CD8-positive, alpha-beta T cell (primary cell): ENCODE measurements at regions of chr2 and their contacts with region 1.

Region 1: DNA sequence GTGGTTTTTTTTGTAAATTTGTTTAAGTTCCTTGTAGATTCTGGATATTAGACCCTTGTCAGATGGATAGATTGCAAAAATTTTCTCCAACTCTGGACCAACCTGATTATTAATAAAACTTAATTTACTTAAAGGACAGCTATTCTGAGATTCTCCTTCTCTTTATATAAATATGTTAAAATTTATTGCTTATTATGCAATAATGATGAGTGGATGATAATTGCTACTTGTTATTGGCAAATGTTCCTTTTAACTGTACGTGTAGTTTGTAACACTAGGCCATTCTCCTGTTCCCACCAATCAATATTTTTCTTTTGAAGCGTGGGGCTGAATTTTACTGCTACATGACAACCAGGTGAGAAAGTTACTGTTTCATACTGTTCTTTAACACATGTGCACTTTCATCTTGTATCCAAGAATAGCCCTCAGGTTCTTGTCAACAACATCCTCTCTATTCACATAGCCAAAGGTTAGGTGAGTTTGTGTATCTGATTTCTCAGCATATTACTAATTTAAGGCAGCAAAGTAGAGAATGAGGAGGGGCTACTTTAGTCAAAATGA is 16.6 kb upstream of the STK17B start:
- DNase-seq: no peak
- ATAC-seq: no peak
- H3K4me3 ChIP-seq: no peak overlapping the region
- H3K4me3 Mint-ChIP-seq: no peak overlapping the region
- H3K27ac ChIP-seq: no peak overlapping the region
- H3K27ac Mint-ChIP-seq: peak overlapping the region; percentile 64
- H3K4me1 ChIP-seq: peaks cover 62% of the 10 kb centered on the region
- H3K4me1 Mint-ChIP-seq: peaks cover 82% of the 10 kb centered on the region
- H3K27me3 ChIP-seq: no peaks in the 10 kb centered on the region
- H3K27me3 Mint-ChIP-seq: no peaks in the 10 kb centered on the region
- CTCF ChIP-seq: no peak

Region 2: GRCh38 chr2:196200557-196200956 is 12.6 kb after region 1 on chr2:
- CTCF ChIA-PET with region 1: interaction called, 5 read pairs
- POLR2A ChIA-PET with region 1: interaction called, 5 read pairs
- intact Hi-C with region 1: loop called (anchors 1 to 2 kb)
- DNase-seq: peak in 2 of 9 experiments; percentile 57 to 72
- ATAC-seq: peak; percentile 83
- H3K4me3 ChIP-seq: peak overlapping the region in 1 of 2 experiments; percentile 30
- H3K4me3 Mint-ChIP-seq: peak overlapping the region; percentile 59
- H3K27ac ChIP-seq: peak overlapping the region; percentile 0 to 58
- H3K27ac Mint-ChIP-seq: peak overlapping the region; percentile 81
- H3K4me1 ChIP-seq: peaks cover 28% of the 10 kb centered on the region
- H3K4me1 Mint-ChIP-seq: peaks cover 50% of the 10 kb centered on the region
- H3K27me3 ChIP-seq: no peaks in the 10 kb centered on the region
- H3K27me3 Mint-ChIP-seq: no peaks in the 10 kb centered on the region
- CTCF ChIP-seq: no peak

Region 3: GRCh38 chr2:197088694-197089093 is 900.7 kb after region 1 on chr2:
- CTCF ChIA-PET with region 1: no interaction called
- POLR2A ChIA-PET with region 1: no interaction called
- intact Hi-C with region 1: no loop called
- DNase-seq: no peak
- ATAC-seq: no peak
- H3K4me3 ChIP-seq: no peak overlapping the region
- H3K4me3 Mint-ChIP-seq: no peak overlapping the region
- H3K27ac ChIP-seq: no peak overlapping the region
- H3K27ac Mint-ChIP-seq: peak overlapping the region; percentile 81
- H3K4me1 ChIP-seq: no peaks in the 10 kb centered on the region
- H3K4me1 Mint-ChIP-seq: peaks cover 18% of the 10 kb centered on the region
- H3K27me3 ChIP-seq: no peaks in the 10 kb centered on the region
- H3K27me3 Mint-ChIP-seq: no peaks in the 10 kb centered on the region
- CTCF ChIP-seq: no peak